Transverse colon (tissue), 4 donors: ENCODE measurements at regions of chr13 and their contacts with region 1.

Region 1: GRCh38 chr13:48356750-48357149 is 53.2 kb downstream of the RB1 start:
- DNase-seq: no peak
- H3K4me3 ChIP-seq: no peak overlapping the region
- H3K27ac ChIP-seq: no peak overlapping the region
- H3K4me1 ChIP-seq: no peaks in the 10 kb centered on the region
- H3K27me3 ChIP-seq: no peaks in the 10 kb centered on the region
- CTCF ChIP-seq: no peak
- EP300 ChIP-seq: no peak
- POLR2A ChIP-seq: no peak

Region 2: GRCh38 chr13:48194379-48194754 is 162.4 kb before region 1 on chr13:
- in situ Hi-C with region 1: no loop called
- intact Hi-C with region 1: no loop called
- DNase-seq: no peak
- H3K4me3 ChIP-seq: no peak overlapping the region
- H3K27ac ChIP-seq: no peak overlapping the region
- H3K4me1 ChIP-seq: no peaks in the 10 kb centered on the region
- H3K27me3 ChIP-seq: no peaks in the 10 kb centered on the region
- CTCF ChIP-seq: no peak
- EP300 ChIP-seq: no peak
- POLR2A ChIP-seq: no peak

Region 3: GRCh38 chr13:48370815-48371214 is 14.1 kb after region 1 on chr13:
- in situ Hi-C with region 1: no loop called
- intact Hi-C with region 1: loop called (anchors 1 kb)
- DNase-seq: no peak
- H3K4me3 ChIP-seq: no peak overlapping the region
- H3K27ac ChIP-seq: no peak overlapping the region
- H3K4me1 ChIP-seq: no peaks in the 10 kb centered on the region
- H3K27me3 ChIP-seq: no peaks in the 10 kb centered on the region
- CTCF ChIP-seq: no peak
- EP300 ChIP-seq: no peak
- POLR2A ChIP-seq: no peak